B cell (primary cell): ENCODE measurements at regions of chr18 and their contacts with region 1.

Region 1: GRCh38 chr18:32930695-32931301 is 158.0 kb upstream of the KLHL14 start:
- DNase-seq: peak; percentile 65
- ATAC-seq: peak; percentile 97
- H3K4me3 ChIP-seq: no peak overlapping the region
- H3K4me3 Mint-ChIP-seq: no peak overlapping the region
- H3K27ac ChIP-seq: no peak overlapping the region
- H3K27ac Mint-ChIP-seq: no peak overlapping the region
- H3K4me1 ChIP-seq: no peaks in the 10 kb centered on the region
- H3K4me1 Mint-ChIP-seq: peaks cover 2% of the 10 kb centered on the region
- H3K27me3 ChIP-seq: peaks cover 0 to 4% (median under 1%) of the 10 kb centered on the region in 4 experiments
- H3K27me3 Mint-ChIP-seq: no peaks in the 10 kb centered on the region
- CTCF ChIP-seq: peak; percentile 80

Region 2: DNA sequence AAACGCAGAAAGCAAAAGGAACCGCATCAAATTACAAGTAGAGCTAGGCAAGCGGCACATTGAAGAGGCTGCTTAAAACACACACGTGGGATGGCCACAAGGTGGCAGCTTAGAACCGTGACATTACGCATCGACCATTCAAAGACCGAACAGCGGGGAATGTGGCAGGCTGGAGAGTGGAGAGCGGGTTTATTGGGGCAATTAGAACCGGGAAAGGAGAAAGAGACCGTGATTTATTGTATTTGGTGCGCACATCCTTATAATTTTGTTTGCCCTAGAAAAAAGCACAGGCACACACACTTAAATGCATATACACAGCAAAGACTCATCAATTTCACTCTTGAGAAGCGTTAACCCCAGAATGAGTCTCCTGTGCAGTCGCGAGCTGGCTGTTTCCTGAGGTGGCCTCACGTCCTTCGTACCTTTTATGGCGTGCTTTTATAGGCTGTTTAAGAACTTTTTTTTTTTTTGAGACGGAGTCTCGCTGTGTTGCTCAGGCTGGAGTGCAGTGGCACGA is 772.6 kb before region 1 on chr18:
- CTCF ChIA-PET with region 1: interaction called, 3 read pairs
- POLR2A ChIA-PET with region 1: no interaction called
- intact Hi-C with region 1: loop called (anchors 10 kb)
- DNase-seq: peak; percentile 80
- ATAC-seq: peak; percentile 89
- H3K4me3 ChIP-seq: peak overlapping the region in 2 of 5 experiments; percentile 25 to 30
- H3K4me3 Mint-ChIP-seq: peak overlapping the region; percentile 50
- H3K27ac ChIP-seq: no peak overlapping the region
- H3K27ac Mint-ChIP-seq: no peak overlapping the region
- H3K4me1 ChIP-seq: peaks cover 4% of the 10 kb centered on the region in 2 donors
- H3K4me1 Mint-ChIP-seq: peaks cover 6% of the 10 kb centered on the region
- H3K27me3 ChIP-seq: peaks cover 0 to 13% (median 2%) of the 10 kb centered on the region in 4 experiments
- H3K27me3 Mint-ChIP-seq: peaks cover 4% of the 10 kb centered on the region
- CTCF ChIP-seq: peak; percentile 88

Region 3: GRCh38 chr18:32576296-32576916 is 354.4 kb before region 1 on chr18:
- CTCF ChIA-PET with region 1: interaction called, 5 read pairs
- POLR2A ChIA-PET with region 1: no interaction called
- intact Hi-C with region 1: loop called (anchors 2 kb)
- DNase-seq: peak; percentile 7
- ATAC-seq: no peak
- H3K4me3 ChIP-seq: no peak overlapping the region
- H3K4me3 Mint-ChIP-seq: no peak overlapping the region
- H3K27ac ChIP-seq: no peak overlapping the region
- H3K27ac Mint-ChIP-seq: no peak overlapping the region
- H3K4me1 ChIP-seq: no peaks in the 10 kb centered on the region
- H3K4me1 Mint-ChIP-seq: no peaks in the 10 kb centered on the region
- H3K27me3 ChIP-seq: no peaks in the 10 kb centered on the region
- H3K27me3 Mint-ChIP-seq: peaks cover 35% of the 10 kb centered on the region
- CTCF ChIP-seq: peak; percentile 29

Region 4: GRCh38 chr18:32911660-32912284 is 19.0 kb before region 1 on chr18:
- CTCF ChIA-PET with region 1: no interaction called
- POLR2A ChIA-PET with region 1: no interaction called
- intact Hi-C with region 1: no loop called
- DNase-seq: no peak
- ATAC-seq: no peak
- H3K4me3 ChIP-seq: no peak overlapping the region
- H3K4me3 Mint-ChIP-seq: no peak overlapping the region
- H3K27ac ChIP-seq: no peak overlapping the region
- H3K27ac Mint-ChIP-seq: no peak overlapping the region
- H3K4me1 ChIP-seq: peaks cover 32 to 43% of the 10 kb centered on the region in 2 donors
- H3K4me1 Mint-ChIP-seq: peaks cover 45% of the 10 kb centered on the region
- H3K27me3 ChIP-seq: no peaks in the 10 kb centered on the region
- H3K27me3 Mint-ChIP-seq: no peaks in the 10 kb centered on the region
- CTCF ChIP-seq: no peak

Region 5: GRCh38 chr18:34729264-34729663 is 1798.5 kb after region 1 on chr18:
- CTCF ChIA-PET with region 1: no interaction called
- POLR2A ChIA-PET with region 1: no interaction called
- intact Hi-C with region 1: no loop called
- DNase-seq: no peak
- ATAC-seq: no peak
- H3K4me3 ChIP-seq: no peak overlapping the region
- H3K4me3 Mint-ChIP-seq: no peak overlapping the region
- H3K27ac ChIP-seq: no peak overlapping the region
- H3K27ac Mint-ChIP-seq: no peak overlapping the region
- H3K4me1 ChIP-seq: no peaks in the 10 kb centered on the region
- H3K4me1 Mint-ChIP-seq: no peaks in the 10 kb centered on the region
- H3K27me3 ChIP-seq: no peaks in the 10 kb centered on the region
- H3K27me3 Mint-ChIP-seq: no peaks in the 10 kb centered on the region
- CTCF ChIP-seq: no peak